Natural killer cell (primary cell): ENCODE measurements at regions of chr17 and their contacts with region 1.

Region 1: DNA sequence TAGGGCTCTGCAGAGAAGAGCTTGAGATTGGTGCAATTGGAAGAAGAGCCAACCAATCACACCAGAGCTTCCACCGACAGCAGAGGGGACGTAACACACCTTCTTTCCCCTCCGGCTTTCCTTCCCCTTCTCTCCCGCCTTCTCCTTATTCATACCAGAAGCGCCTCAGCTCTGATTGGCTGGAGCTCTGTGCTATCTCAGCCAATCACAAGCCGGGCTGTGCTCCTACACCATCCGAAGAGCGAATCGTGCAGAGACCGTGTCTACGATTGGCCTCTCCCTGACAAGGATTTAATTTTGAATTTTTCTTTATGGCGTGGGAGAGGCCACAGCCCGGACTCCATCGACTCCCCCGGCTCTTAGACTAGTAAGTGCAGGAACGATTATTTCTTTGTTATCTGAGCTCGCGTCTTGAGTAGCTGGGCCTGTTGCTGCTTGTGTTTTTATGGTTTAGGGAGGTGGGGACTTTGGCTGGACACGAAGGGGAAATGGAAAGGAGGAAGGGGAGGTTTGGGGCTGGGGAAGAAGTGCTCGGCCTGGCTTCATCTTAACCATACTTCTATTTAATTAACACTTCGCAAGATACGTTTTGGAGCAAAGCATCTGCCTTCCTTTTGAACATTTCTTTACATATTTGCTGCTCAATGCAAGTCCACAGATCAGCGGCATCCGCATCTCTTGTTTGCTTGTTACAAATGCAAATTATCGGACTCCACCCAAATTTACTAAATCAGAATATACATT is at the start of gene PRR11:
- DNase-seq: peak; percentile 84 to 99
- ATAC-seq: peak; percentile 83 to 94 (median 85)
- H3K4me3 ChIP-seq: peak within 1 kb of the TSS; percentile 84
- H3K4me3 Mint-ChIP-seq: no peak within 1 kb of the TSS
- H3K27ac ChIP-seq: peak within 1 kb of the TSS; percentile 58
- H3K27ac Mint-ChIP-seq: no peak within 1 kb of the TSS
- H3K4me1 ChIP-seq: peaks cover 19% of the 10 kb centered on the region
- H3K4me1 Mint-ChIP-seq: peaks cover 14 to 15% of the 10 kb centered on the region in 2 donors
- H3K27me3 ChIP-seq: no peaks in the 10 kb centered on the region
- H3K27me3 Mint-ChIP-seq: no peaks in the 10 kb centered on the region
- CTCF ChIP-seq: no peak
- total RNA-seq, gene PRR11: 2.0 to 4.0 (median 2.9) TPM

Region 2: DNA sequence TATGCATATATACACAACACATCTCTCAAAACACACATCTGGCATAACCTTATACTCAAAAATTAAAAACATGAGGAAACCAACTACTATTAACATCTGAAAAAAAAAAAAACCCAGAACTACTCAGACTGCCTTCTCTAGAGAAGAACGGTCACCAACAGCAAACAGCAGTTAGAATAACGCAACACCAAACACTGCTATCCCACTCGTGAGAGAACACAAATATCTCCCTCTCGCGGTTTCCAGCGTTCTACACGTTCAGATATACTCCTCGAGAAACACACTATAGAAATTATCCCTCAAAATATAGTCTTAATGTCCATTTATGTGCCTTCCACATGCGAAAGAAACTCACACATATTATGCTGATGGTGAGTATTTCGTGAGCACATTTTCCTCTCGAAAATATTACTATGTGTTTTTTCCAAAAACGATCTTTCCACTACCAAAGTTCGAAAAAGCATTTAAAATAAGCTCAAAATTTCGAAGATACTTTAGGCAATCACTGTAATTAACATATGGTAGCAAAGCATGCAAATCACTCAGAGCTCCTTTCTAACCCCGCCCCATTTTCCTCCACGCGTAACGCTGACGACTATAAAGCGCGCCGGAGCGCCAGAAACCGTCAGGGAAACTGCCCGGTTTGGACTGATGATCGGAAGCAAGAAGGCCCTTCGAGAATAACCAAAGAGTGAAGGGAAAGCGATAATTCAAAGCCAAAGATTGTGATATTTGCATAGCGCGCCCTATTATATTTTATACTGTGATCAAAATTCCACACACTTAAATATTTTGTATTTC is 523.9 kb before region 1 on chr17:
- intact Hi-C with region 1: loop called (anchors 10 kb)
- DNase-seq: peak; percentile 96 to 97
- ATAC-seq: peak; percentile 82 to 92 (median 84)
- H3K4me3 ChIP-seq: peak overlapping the region; percentile 33
- H3K4me3 Mint-ChIP-seq: no peak overlapping the region
- H3K27ac ChIP-seq: peak overlapping the region; percentile 76
- H3K27ac Mint-ChIP-seq: no peak overlapping the region
- H3K4me1 ChIP-seq: peaks cover 10% of the 10 kb centered on the region
- H3K4me1 Mint-ChIP-seq: peaks cover 0 to 6% of the 10 kb centered on the region in 2 donors
- H3K27me3 ChIP-seq: no peaks in the 10 kb centered on the region
- H3K27me3 Mint-ChIP-seq: no peaks in the 10 kb centered on the region
- CTCF ChIP-seq: no peak

Region 3: DNA sequence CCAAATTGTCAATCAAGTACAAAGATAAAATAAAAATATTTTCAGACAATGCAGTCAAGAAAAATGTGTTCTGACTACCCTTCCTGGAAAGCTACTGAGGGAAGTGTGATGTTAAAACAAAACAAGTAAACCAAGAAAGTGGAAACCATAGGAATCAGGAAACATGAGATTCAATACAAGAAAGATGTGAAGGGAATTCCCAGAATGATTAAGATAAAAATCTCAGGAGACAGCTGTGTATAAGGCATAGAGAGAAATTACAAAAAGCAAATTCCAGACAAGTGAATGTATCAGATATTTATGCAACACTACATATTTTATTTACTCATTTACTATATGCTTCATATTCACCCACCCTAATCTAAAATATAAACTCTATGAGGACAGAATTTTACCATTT is 81.1 kb before region 1 on chr17:
- intact Hi-C with region 1: no loop called
- DNase-seq: no peak
- ATAC-seq: no peak
- H3K4me3 ChIP-seq: no peak overlapping the region
- H3K4me3 Mint-ChIP-seq: no peak overlapping the region
- H3K27ac ChIP-seq: no peak overlapping the region
- H3K27ac Mint-ChIP-seq: no peak overlapping the region
- H3K4me1 ChIP-seq: no peaks in the 10 kb centered on the region
- H3K4me1 Mint-ChIP-seq: no peaks in the 10 kb centered on the region
- H3K27me3 ChIP-seq: no peaks in the 10 kb centered on the region
- H3K27me3 Mint-ChIP-seq: no peaks in the 10 kb centered on the region
- CTCF ChIP-seq: no peak

Region 4: DNA sequence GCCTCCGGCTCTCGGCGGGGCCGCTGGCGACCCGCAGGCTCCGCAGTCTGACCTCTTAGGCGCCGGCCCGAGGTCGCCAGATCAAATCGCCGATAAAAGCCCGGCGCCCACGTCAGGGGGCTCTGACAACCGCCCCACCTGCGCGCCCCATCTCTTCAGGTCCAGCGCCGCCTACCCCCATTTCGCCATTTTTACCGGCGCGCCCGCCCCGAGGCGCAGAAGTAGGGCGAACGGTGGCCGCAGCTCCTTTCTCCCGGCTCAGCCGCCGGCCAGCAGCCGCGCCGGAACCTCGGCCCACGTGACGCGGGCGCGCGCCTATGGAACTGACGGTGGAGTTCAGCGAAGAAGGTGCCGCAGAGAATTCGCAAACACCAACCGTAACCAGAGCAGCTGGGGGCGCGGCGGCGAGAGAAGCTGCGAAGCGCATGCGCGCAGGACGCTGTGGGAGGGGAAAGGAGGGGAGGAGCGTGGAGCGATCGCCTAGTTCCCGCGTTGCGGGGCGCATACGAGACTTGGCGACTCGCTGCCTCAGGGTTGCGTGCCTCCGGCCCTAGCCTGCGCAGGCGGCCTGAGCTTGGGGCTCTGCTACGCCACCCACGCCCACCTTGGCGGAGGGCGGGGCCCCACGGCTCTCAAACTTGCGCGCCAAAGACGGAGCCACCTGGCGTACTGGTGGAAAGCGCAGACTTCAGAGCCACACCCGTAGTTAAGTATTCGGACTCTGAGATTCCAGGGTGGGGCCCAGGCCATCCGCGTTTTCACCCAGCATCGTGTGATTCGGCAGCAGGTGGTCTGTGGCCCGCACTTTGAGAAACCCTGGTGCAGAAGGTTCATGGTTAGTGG is 48.9 kb before region 1 on chr17 and contains the start of gene TRIM37:
- intact Hi-C with region 1: loop called (anchors 1 kb)
- DNase-seq: peak; percentile 97 to 100
- ATAC-seq: peak; percentile 96 to 100 (median 97)
- H3K4me3 ChIP-seq: peak within 1 kb of the TSS; percentile 99
- H3K4me3 Mint-ChIP-seq: peak within 1 kb of the TSS; percentile 95
- H3K27ac ChIP-seq: peak within 1 kb of the TSS; percentile 90
- H3K27ac Mint-ChIP-seq: peak within 1 kb of the TSS; percentile 92 to 95
- H3K4me1 ChIP-seq: peaks cover 14% of the 10 kb centered on the region
- H3K4me1 Mint-ChIP-seq: peaks cover 24 to 29% of the 10 kb centered on the region in 2 donors
- H3K27me3 ChIP-seq: no peaks in the 10 kb centered on the region
- H3K27me3 Mint-ChIP-seq: no peaks in the 10 kb centered on the region
- CTCF ChIP-seq: no peak
- total RNA-seq, gene TRIM37: 20.4 to 26.1 (median 21.9) TPM

Region 5: DNA sequence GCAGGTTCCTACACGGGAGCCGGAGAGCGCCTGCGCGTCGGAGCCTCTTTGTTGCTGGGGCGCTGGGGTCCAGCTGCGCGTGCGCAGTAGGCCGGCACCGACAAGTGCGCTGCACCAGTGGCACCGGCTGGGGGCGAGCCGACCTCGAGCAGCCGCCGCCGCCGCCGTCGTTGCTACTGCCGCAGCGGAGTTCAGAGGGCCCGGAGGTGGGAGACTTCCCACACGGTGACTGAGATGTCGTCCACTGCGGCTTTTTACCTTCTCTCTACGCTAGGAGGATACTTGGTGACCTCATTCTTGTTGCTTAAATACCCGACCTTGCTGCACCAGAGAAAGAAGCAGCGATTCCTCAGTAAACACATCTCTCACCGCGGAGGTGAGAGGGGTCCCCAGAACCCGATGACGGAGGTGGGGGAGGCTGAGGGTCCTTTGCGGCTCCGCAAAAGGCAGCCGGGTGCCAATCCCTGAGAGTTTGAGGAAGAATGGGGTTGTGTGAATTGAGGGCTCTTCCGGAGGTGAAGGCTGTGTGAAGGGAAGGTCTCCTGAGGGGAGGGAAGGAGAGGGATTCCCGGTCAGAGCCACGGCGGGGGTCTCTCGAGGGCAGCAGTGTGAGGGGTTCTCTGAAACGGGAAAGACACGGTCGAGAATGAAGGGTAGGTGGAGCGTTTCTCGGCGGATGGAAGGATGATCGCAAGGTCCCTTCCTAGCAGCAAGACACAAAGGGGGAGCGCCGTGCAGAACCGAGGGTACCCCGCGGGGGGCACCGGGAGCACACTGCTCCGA is 65.0 kb after region 1 on chr17 and contains the start of gene GDPD1:
- intact Hi-C with region 1: loop called (anchors 10 kb)
- DNase-seq: peak; percentile 96 to 99
- ATAC-seq: peak; percentile 96 to 98 (median 97)
- H3K4me3 ChIP-seq: peak within 1 kb of the TSS; percentile 79
- H3K4me3 Mint-ChIP-seq: peak within 1 kb of the TSS; percentile 99
- H3K27ac ChIP-seq: peak within 1 kb of the TSS; percentile 77
- H3K27ac Mint-ChIP-seq: peak within 1 kb of the TSS; percentile 94 to 98
- H3K4me1 ChIP-seq: peaks cover 11% of the 10 kb centered on the region
- H3K4me1 Mint-ChIP-seq: peaks cover 12 to 14% of the 10 kb centered on the region in 2 donors
- H3K27me3 ChIP-seq: no peaks in the 10 kb centered on the region
- H3K27me3 Mint-ChIP-seq: no peaks in the 10 kb centered on the region
- CTCF ChIP-seq: peak; percentile 65
- total RNA-seq, gene GDPD1: 4.0 to 5.3 (median 5.1) TPM

Region 6: GRCh38 chr17:59668816-59669215 is 513.2 kb after region 1 on chr17:
- intact Hi-C with region 1: no loop called
- DNase-seq: no peak
- ATAC-seq: no peak
- H3K4me3 ChIP-seq: no peak overlapping the region
- H3K4me3 Mint-ChIP-seq: no peak overlapping the region
- H3K27ac ChIP-seq: no peak overlapping the region
- H3K27ac Mint-ChIP-seq: peak overlapping the region; percentile 41 to 45
- H3K4me1 ChIP-seq: no peaks in the 10 kb centered on the region
- H3K4me1 Mint-ChIP-seq: peaks cover 7 to 26% of the 10 kb centered on the region in 2 donors
- H3K27me3 ChIP-seq: no peaks in the 10 kb centered on the region
- H3K27me3 Mint-ChIP-seq: no peaks in the 10 kb centered on the region
- CTCF ChIP-seq: no peak